Activated CD8-positive, alpha-beta T cell treated with anti-CD3 and anti-CD28 coated beads for 36 hours (primary cell): ENCODE measurements at regions of chr4 and their contacts with region 1.

Region 1: GRCh38 chr4:185183619-185184281 is 20.1 kb downstream of the CFAP97 start:
- DNase-seq: peak; percentile 89
- ATAC-seq: peak; percentile 60
- H3K4me3 Mint-ChIP-seq: no peak overlapping the region
- H3K27ac Mint-ChIP-seq: no peak overlapping the region
- H3K4me1 Mint-ChIP-seq: peaks cover 33% of the 10 kb centered on the region
- H3K27me3 Mint-ChIP-seq: no peaks in the 10 kb centered on the region
- CTCF ChIP-seq: peak; percentile 85

Region 2: DNA sequence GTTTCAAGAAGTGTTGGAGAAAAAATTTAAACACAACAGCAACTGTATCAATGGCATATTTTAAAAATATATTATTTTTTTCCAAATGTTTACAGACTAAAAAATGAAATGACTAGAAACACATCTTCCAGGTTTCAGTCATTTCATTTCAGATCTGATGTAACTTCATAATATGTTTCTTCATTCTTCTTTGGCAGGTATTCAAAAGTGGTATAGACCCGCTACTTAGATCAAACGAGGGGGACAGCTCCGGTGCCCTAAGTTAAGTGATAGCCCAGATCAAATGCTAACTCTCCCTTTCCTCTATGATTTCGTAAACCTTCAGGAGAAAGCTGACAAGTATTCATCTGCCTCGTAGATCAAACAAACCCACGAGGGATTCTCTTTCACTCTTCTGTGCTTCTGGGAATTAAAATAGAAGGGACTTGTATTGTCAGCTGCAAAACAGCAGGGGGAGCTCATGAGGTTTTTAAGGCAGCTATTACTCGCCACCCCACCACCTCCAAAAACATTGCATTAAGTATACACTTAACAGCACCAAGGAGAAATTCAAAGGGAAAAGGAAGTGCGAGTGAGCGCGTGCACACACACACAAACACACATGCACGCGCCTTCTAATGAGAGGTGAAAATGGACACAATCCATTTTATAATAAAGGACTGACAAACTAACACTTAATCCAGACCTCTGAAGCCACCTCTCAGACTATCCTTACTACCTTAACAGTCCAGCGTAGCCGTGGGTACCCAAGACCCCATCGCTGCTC is 144.1 kb before region 1 on chr4:
- CTCF ChIA-PET with region 1: interaction called, 16 read pairs
- POLR2A ChIA-PET with region 1: no interaction called
- intact Hi-C with region 1: no loop called
- DNase-seq: peak; percentile 67
- ATAC-seq: peak; percentile 95
- H3K4me3 Mint-ChIP-seq: peak overlapping the region; percentile 71
- H3K27ac Mint-ChIP-seq: peak overlapping the region; percentile 81
- H3K4me1 Mint-ChIP-seq: peaks cover 12% of the 10 kb centered on the region
- H3K27me3 Mint-ChIP-seq: peaks cover 4% of the 10 kb centered on the region
- CTCF ChIP-seq: peak; percentile 77

Region 3: DNA sequence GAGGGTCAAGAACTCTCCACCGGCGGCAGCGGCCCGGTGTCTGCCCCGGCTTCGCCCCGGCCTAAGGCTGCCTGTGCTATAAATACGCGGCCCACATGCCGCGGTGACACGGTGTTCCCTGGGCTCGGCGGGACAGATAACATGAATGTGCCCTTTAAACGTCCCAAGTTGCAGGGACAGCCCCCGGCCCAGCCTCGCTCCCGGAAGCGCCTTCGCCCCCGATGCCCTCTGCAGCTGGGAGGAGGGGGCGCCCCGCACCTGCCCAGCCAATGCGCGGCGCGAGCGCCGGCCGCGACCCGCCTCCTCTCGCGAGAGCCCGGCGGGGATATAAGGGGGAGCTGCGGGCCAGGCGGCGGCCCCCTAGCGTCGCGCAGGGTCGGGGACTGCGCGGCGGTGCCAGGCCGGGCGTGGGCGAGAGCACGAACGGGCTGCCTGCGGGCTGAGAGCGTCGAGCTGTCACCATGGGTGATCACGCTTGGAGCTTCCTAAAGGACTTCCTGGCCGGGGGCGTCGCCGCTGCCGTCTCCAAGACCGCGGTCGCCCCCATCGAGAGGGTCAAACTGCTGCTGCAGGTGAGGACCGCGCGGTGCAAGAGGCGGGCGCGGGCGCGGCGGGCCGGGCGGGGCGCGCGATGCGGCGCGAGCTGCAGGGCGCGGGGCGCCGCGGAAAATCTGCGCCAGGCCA is 40.7 kb before region 1 on chr4 and contains the start of gene SLC25A4:
- CTCF ChIA-PET with region 1: interaction called, 30 read pairs
- POLR2A ChIA-PET with region 1: no interaction called
- intact Hi-C with region 1: no loop called
- DNase-seq: peak; percentile 91
- ATAC-seq: peak; percentile 97
- H3K4me3 Mint-ChIP-seq: peak within 1 kb of the TSS; percentile 78
- H3K27ac Mint-ChIP-seq: peak within 1 kb of the TSS; percentile 76
- H3K4me1 Mint-ChIP-seq: peaks cover 13% of the 10 kb centered on the region
- H3K27me3 Mint-ChIP-seq: peaks cover 3% of the 10 kb centered on the region
- CTCF ChIP-seq: peak; percentile 47
- total RNA-seq, gene SLC25A4: 8.5 to 8.7 TPM

Region 4: GRCh38 chr4:185149392-185149791 is 34.4 kb before region 1 on chr4:
- CTCF ChIA-PET with region 1: interaction called, 30 read pairs
- POLR2A ChIA-PET with region 1: no interaction called
- intact Hi-C with region 1: no loop called
- DNase-seq: no peak
- ATAC-seq: no peak
- H3K4me3 Mint-ChIP-seq: no peak overlapping the region
- H3K27ac Mint-ChIP-seq: no peak overlapping the region
- H3K4me1 Mint-ChIP-seq: no peaks in the 10 kb centered on the region
- H3K27me3 Mint-ChIP-seq: no peaks in the 10 kb centered on the region
- CTCF ChIP-seq: no peak

Region 5: DNA sequence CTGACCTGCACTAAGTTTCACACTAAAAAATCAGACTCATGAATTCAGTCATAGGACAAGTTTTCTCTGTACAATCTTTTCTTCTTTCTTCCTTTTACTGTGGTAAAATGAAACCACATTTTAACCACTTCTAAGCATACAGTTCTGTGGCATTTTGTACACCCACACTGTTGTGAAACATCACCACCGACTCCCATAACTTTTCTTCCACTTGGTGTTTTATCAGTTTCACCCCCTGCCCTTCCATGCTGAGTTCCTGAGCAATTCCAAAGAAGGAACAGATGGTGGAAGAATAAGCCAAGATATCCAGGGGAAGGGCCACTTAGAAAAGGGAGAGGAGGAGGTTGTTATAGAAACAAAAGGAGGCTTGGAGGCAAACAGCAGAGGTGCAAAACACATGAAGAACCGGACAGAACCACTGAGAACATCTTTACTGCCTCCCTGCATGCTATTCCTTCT is 18.1 kb before region 1 on chr4:
- CTCF ChIA-PET with region 1: interaction called, 20 read pairs
- POLR2A ChIA-PET with region 1: interaction called, 3 read pairs
- intact Hi-C with region 1: no loop called
- DNase-seq: no peak
- ATAC-seq: peak; percentile 85
- H3K4me3 Mint-ChIP-seq: peak overlapping the region; percentile 30
- H3K27ac Mint-ChIP-seq: peak overlapping the region; percentile 58
- H3K4me1 Mint-ChIP-seq: peaks cover 20% of the 10 kb centered on the region
- H3K27me3 Mint-ChIP-seq: peaks cover 3% of the 10 kb centered on the region
- CTCF ChIP-seq: no peak

Region 6: DNA sequence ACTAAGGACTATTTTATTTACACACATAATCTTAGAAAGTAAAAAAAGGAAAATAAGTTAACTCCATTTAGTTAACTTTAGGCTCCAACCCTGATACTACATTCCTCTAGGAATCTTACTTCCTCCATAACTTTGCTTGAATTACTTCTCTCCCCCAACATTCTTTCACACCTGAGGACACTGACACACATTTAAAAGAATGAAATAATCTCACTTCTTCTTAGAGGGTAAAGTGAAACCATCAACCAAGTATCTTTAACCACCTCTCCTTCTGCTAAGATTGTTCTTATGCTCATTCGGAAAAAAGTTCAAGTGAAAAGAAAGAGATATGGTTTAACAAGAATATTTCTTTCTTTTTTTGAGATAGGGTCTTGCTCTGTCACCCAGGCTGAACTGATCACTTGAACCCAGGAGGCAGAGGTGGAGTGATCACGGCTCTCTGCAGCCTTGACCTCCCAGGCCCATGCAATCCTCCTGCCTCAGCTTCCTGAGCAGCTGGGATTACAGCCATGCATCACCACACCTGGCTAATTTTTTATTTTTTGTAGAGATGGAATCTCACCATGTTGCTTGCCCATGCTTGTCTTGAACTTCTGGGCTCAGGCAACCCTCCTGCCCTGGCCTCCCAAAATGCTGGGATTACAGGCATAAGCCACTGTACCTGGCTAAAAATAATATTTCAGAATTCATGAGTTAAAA is 12.2 kb before region 1 on chr4:
- CTCF ChIA-PET with region 1: interaction called, 28 read pairs
- POLR2A ChIA-PET with region 1: no interaction called
- intact Hi-C with region 1: no loop called
- DNase-seq: no peak
- ATAC-seq: no peak
- H3K4me3 Mint-ChIP-seq: no peak overlapping the region
- H3K27ac Mint-ChIP-seq: no peak overlapping the region
- H3K4me1 Mint-ChIP-seq: peaks cover 3% of the 10 kb centered on the region
- H3K27me3 Mint-ChIP-seq: peaks cover 1% of the 10 kb centered on the region
- CTCF ChIP-seq: no peak

Region 7: DNA sequence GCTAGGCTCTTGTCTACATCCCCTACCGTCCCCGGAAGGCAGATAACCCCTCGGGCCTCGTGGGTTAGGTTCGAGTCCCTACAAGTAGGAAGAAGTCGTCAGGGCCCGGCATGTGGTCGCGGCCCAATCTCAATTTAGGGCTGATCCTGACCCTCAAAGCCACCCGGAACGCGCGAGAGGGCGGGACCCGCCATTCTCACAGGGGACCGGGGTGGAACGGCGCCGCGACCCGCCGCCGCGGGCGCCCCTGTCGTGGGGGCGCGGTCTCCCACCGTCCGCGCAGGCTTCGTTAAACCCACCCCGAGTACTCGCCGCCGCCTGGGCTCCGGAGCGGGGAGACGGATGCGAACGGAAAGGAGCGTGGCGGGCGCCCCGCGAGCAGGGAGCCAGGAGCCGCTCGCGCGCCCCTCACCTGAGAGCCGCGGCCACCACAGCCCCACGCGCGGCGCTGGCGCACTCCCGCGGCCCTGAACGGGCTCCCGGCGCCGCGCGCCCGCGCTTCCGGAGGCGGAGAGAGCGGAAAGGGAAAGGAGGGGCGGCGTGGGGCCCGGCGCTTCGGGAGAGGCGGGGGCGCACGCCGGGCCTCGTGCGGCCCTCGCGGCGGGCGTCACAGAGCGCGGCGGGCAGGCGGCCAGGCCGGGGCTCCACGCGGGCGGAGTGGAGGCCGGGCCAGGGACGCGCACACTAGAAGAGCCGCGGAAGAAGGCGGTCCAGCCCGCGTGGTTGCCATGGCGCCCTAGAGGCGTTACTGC is 19.9 kb after region 1 on chr4 and contains the start of gene CFAP97:
- CTCF ChIA-PET with region 1: interaction called, 81 read pairs
- POLR2A ChIA-PET with region 1: interaction called, 3 read pairs
- intact Hi-C with region 1: no loop called
- DNase-seq: peak; percentile 80
- ATAC-seq: peak; percentile 84
- H3K4me3 Mint-ChIP-seq: peak within 1 kb of the TSS; percentile 78
- H3K27ac Mint-ChIP-seq: peak within 1 kb of the TSS; percentile 97
- H3K4me1 Mint-ChIP-seq: peaks cover 38% of the 10 kb centered on the region
- H3K27me3 Mint-ChIP-seq: no peaks in the 10 kb centered on the region
- CTCF ChIP-seq: no peak
- total RNA-seq, gene CFAP97: 48.5 to 50.3 TPM

Region 8: GRCh38 chr4:185341841-185342240 is 158.1 kb after region 1 on chr4:
- CTCF ChIA-PET with region 1: no interaction called
- POLR2A ChIA-PET with region 1: no interaction called
- intact Hi-C with region 1: no loop called
- DNase-seq: peak; percentile 18
- ATAC-seq: peak; percentile 60
- H3K4me3 Mint-ChIP-seq: no peak overlapping the region
- H3K27ac Mint-ChIP-seq: peak overlapping the region; percentile 35
- H3K4me1 Mint-ChIP-seq: peaks cover 39% of the 10 kb centered on the region
- H3K27me3 Mint-ChIP-seq: no peaks in the 10 kb centered on the region
- CTCF ChIP-seq: no peak